ENCODE measurements at regions of chr2 and their contacts with region 1.

Region 1: GRCh38 chr2:108927936-108928659 is 60.9 kb downstream of the EDAR start:
- DNase-seq: peak; percentile 75
- H3K4me3 Mint-ChIP-seq: no peak overlapping the region
- H3K27ac Mint-ChIP-seq: no peak overlapping the region
- H3K4me1 Mint-ChIP-seq: peaks cover 7% of the 10 kb centered on the region
- H3K27me3 Mint-ChIP-seq: peaks cover 24% of the 10 kb centered on the region
- CTCF ChIP-seq: peak; percentile 72

Region 2: GRCh38 chr2:108637304-108637669 is 290.8 kb before region 1 on chr2:
- CTCF ChIA-PET with region 1: no interaction called
- POLR2A ChIA-PET with region 1: no interaction called
- intact Hi-C with region 1: no loop called
- DNase-seq: peak; percentile 46
- H3K4me3 Mint-ChIP-seq: no peak overlapping the region
- H3K27ac Mint-ChIP-seq: peak overlapping the region; percentile 35
- H3K4me1 Mint-ChIP-seq: peaks cover 38% of the 10 kb centered on the region
- H3K27me3 Mint-ChIP-seq: no peaks in the 10 kb centered on the region
- CTCF ChIP-seq: no peak

Region 3: GRCh38 chr2:108786354-108787199 is 141.5 kb before region 1 on chr2 and contains the start of gene CCDC138:
- CTCF ChIA-PET with region 1: no interaction called
- POLR2A ChIA-PET with region 1: no interaction called
- intact Hi-C with region 1: no loop called
- DNase-seq: peak; percentile 89
- H3K4me3 Mint-ChIP-seq: peak within 1 kb of the TSS; percentile 95
- H3K27ac Mint-ChIP-seq: peak within 1 kb of the TSS; percentile 93
- H3K4me1 Mint-ChIP-seq: peaks cover 5% of the 10 kb centered on the region
- H3K27me3 Mint-ChIP-seq: no peaks in the 10 kb centered on the region
- CTCF ChIP-seq: no peak
- total RNA-seq, gene CCDC138: 3.5 and 4.3 TPM in 2 replicates

Region 4: DNA sequence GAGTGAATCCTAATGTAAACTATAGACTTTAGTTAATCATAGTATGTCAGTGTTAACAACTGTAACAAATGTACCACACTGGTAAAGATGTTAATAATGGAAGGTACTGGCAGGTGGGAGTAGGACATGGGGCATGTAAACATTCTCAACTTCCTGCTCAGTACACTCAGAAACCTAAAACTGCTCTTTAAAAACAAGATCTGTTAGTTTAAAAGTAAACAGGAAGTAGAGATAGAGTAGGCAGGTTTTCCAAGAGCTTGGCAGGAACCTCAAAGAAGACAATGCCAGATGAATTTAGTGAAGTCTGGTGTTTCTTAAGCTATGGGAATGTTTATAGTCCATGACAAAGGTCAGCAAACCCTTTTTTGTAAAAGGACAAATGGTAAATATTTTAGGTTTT is 94.9 kb before region 1 on chr2:
- CTCF ChIA-PET with region 1: no interaction called
- POLR2A ChIA-PET with region 1: no interaction called
- intact Hi-C with region 1: no loop called
- DNase-seq: no peak
- H3K4me3 Mint-ChIP-seq: no peak overlapping the region
- H3K27ac Mint-ChIP-seq: no peak overlapping the region
- H3K4me1 Mint-ChIP-seq: peaks cover 6% of the 10 kb centered on the region
- H3K27me3 Mint-ChIP-seq: no peaks in the 10 kb centered on the region
- CTCF ChIP-seq: no peak

Region 5: DNA sequence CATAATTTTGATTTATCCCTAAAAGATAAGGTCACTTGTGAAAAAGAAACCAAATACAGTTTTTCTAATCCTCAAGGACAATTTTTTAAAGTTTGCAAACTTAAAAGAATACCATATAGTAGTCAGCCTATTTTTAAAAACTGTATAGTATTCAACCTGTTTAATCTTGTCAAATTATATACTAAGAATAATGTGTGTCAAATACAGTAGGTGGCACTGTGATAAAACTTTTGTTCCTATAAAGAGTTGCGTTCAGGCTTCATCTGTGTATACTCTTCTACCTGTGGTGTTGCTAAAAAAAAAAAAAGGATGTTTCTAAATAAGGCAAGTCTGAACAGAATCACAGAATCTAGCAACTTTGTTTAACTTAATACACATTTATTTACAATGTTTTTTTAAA is 72.9 kb before region 1 on chr2:
- CTCF ChIA-PET with region 1: interaction called, 9 read pairs
- POLR2A ChIA-PET with region 1: interaction called, 3 read pairs
- intact Hi-C with region 1: loop called (anchors 1 kb)
- DNase-seq: peak; percentile 42
- H3K4me3 Mint-ChIP-seq: no peak overlapping the region
- H3K27ac Mint-ChIP-seq: no peak overlapping the region
- H3K4me1 Mint-ChIP-seq: no peaks in the 10 kb centered on the region
- H3K27me3 Mint-ChIP-seq: no peaks in the 10 kb centered on the region
- CTCF ChIP-seq: peak; percentile 30

Region 6: GRCh38 chr2:108906403-108907077 is 21.6 kb before region 1 on chr2:
- CTCF ChIA-PET with region 1: no interaction called
- POLR2A ChIA-PET with region 1: no interaction called
- intact Hi-C with region 1: no loop called
- DNase-seq: no peak
- H3K4me3 Mint-ChIP-seq: no peak overlapping the region
- H3K27ac Mint-ChIP-seq: no peak overlapping the region
- H3K4me1 Mint-ChIP-seq: no peaks in the 10 kb centered on the region
- H3K27me3 Mint-ChIP-seq: peaks cover 8% of the 10 kb centered on the region
- CTCF ChIP-seq: no peak

Region 7: DNA sequence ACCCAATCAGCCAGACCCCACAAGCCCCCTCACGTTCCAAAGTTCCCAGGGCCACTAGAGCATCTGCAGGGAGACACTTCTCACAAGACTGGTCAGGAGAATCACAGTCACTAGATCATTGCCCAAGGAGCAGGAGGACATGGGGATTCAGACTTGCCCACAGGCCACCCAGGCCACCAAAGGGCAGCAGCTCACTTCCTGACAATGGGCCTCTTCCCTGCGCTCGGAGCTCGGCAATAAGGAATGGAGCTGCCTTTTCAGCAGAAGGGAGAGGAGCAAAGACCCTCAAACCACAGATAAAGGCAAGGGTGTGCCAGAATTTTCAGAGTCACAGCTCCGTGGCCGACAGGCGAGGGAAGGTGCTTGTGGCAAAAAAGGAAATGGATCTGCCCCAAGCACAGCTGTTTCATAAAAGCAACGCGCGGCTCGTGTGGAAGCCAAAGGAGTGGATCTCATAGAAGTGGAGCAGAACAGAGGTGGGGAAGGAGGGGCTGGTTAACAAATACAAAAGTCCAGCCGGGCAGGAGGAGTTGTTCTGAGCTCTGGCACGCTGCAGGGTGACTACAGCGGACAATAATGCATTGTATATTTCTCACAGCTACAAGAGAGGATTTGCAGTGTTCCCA is 11.2 kb before region 1 on chr2:
- CTCF ChIA-PET with region 1: interaction called, 16 read pairs
- POLR2A ChIA-PET with region 1: interaction called, 3 read pairs
- intact Hi-C with region 1: no loop called
- DNase-seq: no peak
- H3K4me3 Mint-ChIP-seq: no peak overlapping the region
- H3K27ac Mint-ChIP-seq: no peak overlapping the region
- H3K4me1 Mint-ChIP-seq: peaks cover 6% of the 10 kb centered on the region
- H3K27me3 Mint-ChIP-seq: peaks cover 11% of the 10 kb centered on the region
- CTCF ChIP-seq: no peak

Region 8: GRCh38 chr2:108971661-108972566 is 43.8 kb after region 1 on chr2:
- CTCF ChIA-PET with region 1: interaction called, 13 read pairs
- POLR2A ChIA-PET with region 1: interaction called, 12 read pairs
- intact Hi-C with region 1: loop called (anchors 1 kb)
- DNase-seq: peak; percentile 95
- H3K4me3 Mint-ChIP-seq: peak overlapping the region; percentile 52
- H3K27ac Mint-ChIP-seq: peak overlapping the region; percentile 71
- H3K4me1 Mint-ChIP-seq: peaks cover 49% of the 10 kb centered on the region
- H3K27me3 Mint-ChIP-seq: no peaks in the 10 kb centered on the region
- CTCF ChIP-seq: no peak

Region 9: GRCh38 chr2:108988796-108989713 is 61.0 kb after region 1 on chr2 and contains the start of gene EDAR:
- CTCF ChIA-PET with region 1: interaction called, 94 read pairs
- POLR2A ChIA-PET with region 1: no interaction called
- intact Hi-C with region 1: loop called (anchors 1 kb)
- DNase-seq: peak; percentile 80
- H3K4me3 Mint-ChIP-seq: peak within 1 kb of the TSS; percentile 55
- H3K27ac Mint-ChIP-seq: no peak within 1 kb of the TSS
- H3K4me1 Mint-ChIP-seq: peaks cover 26% of the 10 kb centered on the region
- H3K27me3 Mint-ChIP-seq: peaks cover 11% of the 10 kb centered on the region
- CTCF ChIP-seq: peak; percentile 83
- total RNA-seq, gene EDAR: 0.14 and 0.37 TPM in 2 replicates

Region 10: GRCh38 chr2:108998911-108999310 is 70.8 kb after region 1 on chr2:
- CTCF ChIA-PET with region 1: interaction called, 10 read pairs
- POLR2A ChIA-PET with region 1: no interaction called
- intact Hi-C with region 1: no loop called
- DNase-seq: no peak
- H3K4me3 Mint-ChIP-seq: no peak overlapping the region
- H3K27ac Mint-ChIP-seq: no peak overlapping the region
- H3K4me1 Mint-ChIP-seq: no peaks in the 10 kb centered on the region
- H3K27me3 Mint-ChIP-seq: no peaks in the 10 kb centered on the region
- CTCF ChIP-seq: no peak

Measured in MCF 10A (cell line).